Endothelial cell of umbilical vein (primary cell): ENCODE measurements at regions of chr21 and their contacts with region 1.

Region 1: DNA sequence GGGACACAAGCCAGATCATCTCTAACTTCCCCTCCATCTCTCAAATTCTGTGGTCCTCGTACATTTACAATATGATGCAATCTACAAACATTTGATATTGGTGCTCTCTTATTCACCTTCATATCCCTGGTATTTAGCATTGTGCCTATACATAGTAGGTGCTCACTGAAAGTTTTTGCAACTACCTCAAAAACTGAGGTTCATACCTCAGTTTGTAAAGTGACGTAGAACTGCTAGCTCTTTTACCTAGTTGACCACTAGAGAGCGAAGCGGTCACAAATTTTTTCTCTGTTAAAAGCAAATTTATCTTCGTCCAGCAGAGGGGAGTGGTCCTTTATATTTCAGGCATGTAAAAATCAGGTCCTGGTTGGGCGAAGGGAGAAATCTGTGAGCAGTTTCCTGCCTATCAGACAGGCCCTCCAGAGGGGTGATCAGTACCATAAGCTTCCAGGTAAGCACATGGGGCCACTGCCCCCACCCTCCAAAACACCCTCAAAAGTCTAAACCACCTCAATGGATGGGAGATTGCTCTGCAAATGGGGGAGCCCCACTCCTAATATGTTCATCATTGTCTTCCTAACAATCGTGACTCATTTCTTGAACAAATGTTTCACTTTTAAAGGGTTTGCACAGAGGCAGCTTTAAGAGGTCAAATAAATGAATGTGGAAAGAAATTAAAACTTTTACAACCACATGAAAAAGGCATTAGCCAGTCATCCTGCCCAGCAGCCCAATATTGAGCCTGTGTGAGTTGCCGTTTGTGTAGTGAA is 10.6 kb upstream of the HLCS start:
- DNase-seq: peak; percentile 88
- H3K4me3 ChIP-seq: no peak overlapping the region
- H3K27ac ChIP-seq: no peak overlapping the region
- H3K4me1 ChIP-seq: peaks cover 14% of the 10 kb centered on the region
- H3K27me3 ChIP-seq: no peaks in the 10 kb centered on the region
- CTCF ChIP-seq: peak; percentile 58 to 68
- POLR2A ChIP-seq: no peak

Region 2: GRCh38 chr21:36567216-36567885 is 409.7 kb before region 1 on chr21:
- CTCF ChIA-PET with region 1: no interaction called
- POLR2A ChIA-PET with region 1: no interaction called
- dilution Hi-C with region 1: no loop called
- intact Hi-C with region 1: no loop called
- DNase-seq: no peak
- H3K4me3 ChIP-seq: no peak overlapping the region
- H3K27ac ChIP-seq: no peak overlapping the region
- H3K4me1 ChIP-seq: no peaks in the 10 kb centered on the region
- H3K27me3 ChIP-seq: peaks cover 18 to 42% of the 10 kb centered on the region in 2 experiments
- CTCF ChIP-seq: no peak
- POLR2A ChIP-seq: no peak

Region 3: DNA sequence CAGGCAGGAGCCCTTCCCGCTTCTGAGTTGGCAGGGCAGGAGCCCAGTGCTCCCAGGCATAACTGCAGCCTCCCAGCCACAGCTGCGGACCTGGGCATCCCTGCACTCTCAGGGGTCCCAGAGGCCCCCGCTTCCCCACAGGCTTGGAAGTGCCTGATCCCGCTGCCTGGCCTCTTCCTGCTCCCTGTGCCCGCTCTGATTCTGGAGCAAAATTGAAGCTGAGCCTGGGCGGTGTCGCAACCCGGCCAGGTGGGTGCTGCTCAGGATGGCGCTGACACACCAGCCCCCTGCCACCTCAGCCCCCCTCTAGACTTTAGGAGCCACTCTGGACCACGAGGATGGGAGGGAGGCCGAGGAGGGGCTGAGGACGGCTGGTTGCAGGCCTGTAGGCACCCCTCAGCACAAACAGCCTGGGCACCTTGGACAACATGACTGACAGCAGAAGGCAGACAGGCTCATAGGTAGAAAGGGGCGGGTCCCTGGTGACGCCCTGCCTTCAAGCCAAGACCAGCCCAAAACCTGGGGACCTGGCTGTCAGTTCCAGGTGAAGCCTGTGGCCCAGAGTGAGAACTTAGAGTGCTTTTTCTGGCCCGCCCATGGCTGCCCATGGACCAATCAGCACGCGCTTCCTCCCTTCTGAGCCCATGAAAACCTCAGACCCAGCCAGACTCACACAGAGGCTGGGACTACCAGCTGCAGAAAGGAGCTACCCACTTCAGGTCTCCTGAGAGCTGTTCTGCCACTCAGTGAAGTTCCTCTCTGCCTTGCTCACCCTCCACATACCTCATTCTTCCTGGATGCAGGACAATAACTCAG is 17.8 kb before region 1 on chr21:
- CTCF ChIA-PET with region 1: interaction called, 20 read pairs
- POLR2A ChIA-PET with region 1: interaction called, 4 read pairs
- dilution Hi-C with region 1: no loop called
- intact Hi-C with region 1: no loop called
- DNase-seq: no peak
- H3K4me3 ChIP-seq: no peak overlapping the region
- H3K27ac ChIP-seq: no peak overlapping the region
- H3K4me1 ChIP-seq: no peaks in the 10 kb centered on the region
- H3K27me3 ChIP-seq: no peaks in the 10 kb centered on the region
- CTCF ChIP-seq: no peak
- POLR2A ChIP-seq: no peak

Region 4: DNA sequence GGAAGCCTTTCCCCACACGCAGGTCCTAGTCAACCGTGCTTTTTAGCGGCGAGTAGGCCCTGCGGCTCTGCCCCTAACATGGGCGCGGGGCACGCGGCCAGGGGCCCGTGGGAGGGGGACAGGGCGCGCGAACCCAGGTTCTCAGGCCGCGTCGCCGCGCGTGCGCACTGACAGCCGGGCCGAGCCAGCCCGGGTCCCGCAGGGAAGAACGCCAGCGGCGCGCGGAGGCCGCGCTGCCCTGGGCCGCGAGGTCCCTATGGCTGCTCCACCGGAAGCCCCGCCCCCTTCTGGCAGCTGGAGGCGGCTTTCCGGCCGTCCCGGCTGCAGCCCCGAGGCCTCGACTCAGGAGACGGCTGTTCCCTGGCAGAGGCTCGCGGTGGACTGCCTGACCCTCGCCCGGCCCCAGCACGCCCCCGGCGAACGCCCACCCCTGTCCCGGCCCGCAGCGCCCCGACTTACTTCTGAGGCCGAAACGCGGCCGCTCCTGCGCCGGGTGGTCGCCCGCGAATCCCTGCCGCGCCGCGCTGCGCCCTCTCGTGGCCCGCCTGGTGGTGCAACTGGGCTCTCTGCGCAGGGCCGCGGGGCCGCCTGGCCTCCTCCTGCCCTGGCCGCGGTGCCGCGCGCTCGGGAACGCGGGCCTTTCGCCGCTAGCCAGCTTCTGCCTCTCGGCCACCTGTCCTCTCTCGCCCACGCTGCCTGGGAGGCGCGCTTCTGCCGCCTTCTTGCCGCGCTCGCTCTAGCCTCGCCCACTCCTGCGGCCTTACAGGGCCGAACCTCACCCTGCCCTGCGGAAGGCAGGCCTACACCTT is 12.8 kb after region 1 on chr21:
- CTCF ChIA-PET with region 1: interaction called, 109 read pairs
- POLR2A ChIA-PET with region 1: no interaction called
- dilution Hi-C with region 1: no loop called
- intact Hi-C with region 1: loop called (anchors 1 kb)
- DNase-seq: peak; percentile 90
- H3K4me3 ChIP-seq: peak overlapping the region in 2 of 3 experiments; percentile 24 to 56
- H3K27ac ChIP-seq: peak overlapping the region; percentile 36
- H3K4me1 ChIP-seq: peaks cover 2% of the 10 kb centered on the region
- H3K27me3 ChIP-seq: no peaks in the 10 kb centered on the region
- CTCF ChIP-seq: peak; percentile 84 to 87
- POLR2A ChIP-seq: peak; percentile 73

Region 5: DNA sequence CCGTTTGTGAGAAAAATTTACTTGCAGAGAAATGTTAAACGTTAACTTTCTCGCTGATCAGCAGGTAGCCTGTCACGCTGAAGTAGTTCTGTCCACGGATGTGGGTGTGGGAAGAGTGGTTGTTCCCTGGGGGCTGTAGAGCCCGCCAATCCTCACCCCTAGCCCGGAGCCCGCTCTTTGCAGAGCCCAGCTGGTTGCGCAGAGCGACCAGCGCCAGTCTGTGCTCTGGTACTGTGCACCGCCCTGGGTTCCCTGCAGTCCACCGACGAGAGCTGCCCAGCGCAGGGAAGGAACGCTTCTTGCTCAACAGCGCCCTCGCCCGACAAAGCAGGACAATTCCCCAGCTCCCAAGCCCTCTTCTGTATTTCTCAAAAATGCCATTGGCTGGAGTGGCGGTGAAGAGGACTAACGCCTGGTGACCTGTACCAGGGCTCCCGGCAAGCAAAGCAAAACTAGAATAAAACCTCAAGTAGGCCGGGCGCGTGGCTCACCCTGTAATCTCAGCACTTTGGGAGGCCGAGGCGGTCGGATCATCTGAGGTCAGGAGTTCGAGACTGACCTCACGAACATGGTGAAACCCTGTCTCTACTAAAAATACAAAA is 32.8 kb after region 1 on chr21:
- CTCF ChIA-PET with region 1: interaction called, 130 read pairs
- POLR2A ChIA-PET with region 1: no interaction called
- dilution Hi-C with region 1: no loop called
- intact Hi-C with region 1: loop called (anchors 1 kb)
- DNase-seq: peak; percentile 90
- H3K4me3 ChIP-seq: peak overlapping the region in 2 of 3 experiments; percentile 10 to 40
- H3K27ac ChIP-seq: no peak overlapping the region
- H3K4me1 ChIP-seq: peaks cover 8% of the 10 kb centered on the region
- H3K27me3 ChIP-seq: peaks cover 25 to 32% of the 10 kb centered on the region in 2 experiments
- CTCF ChIP-seq: peak; percentile 87 to 94
- POLR2A ChIP-seq: no peak

Region 6: DNA sequence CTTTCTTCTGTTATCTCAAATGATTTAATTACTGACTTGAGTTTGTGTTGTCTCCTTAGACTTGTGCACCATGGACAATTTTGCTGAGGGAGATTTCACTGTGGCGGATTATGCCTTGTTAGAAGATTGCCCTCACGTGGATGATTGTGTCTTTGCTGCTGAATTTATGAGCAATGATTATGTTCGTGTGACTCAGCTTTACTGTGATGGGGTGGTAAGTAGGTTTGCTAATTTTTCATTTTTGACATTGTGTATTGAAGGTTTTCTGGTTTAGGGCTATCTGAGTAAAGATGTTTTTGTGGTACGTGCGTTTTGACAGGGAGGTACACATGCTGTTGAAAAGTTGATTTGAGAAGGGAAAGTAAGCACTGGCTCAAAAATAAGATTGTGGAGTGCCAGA is 110.1 kb after region 1 on chr21:
- CTCF ChIA-PET with region 1: interaction called, 13 read pairs
- POLR2A ChIA-PET with region 1: no interaction called
- dilution Hi-C with region 1: no loop called
- intact Hi-C with region 1: no loop called
- DNase-seq: peak; percentile 31
- H3K4me3 ChIP-seq: no peak overlapping the region
- H3K27ac ChIP-seq: no peak overlapping the region
- H3K4me1 ChIP-seq: no peaks in the 10 kb centered on the region
- H3K27me3 ChIP-seq: no peaks in the 10 kb centered on the region
- CTCF ChIP-seq: no peak
- POLR2A ChIP-seq: no peak

Region 7: DNA sequence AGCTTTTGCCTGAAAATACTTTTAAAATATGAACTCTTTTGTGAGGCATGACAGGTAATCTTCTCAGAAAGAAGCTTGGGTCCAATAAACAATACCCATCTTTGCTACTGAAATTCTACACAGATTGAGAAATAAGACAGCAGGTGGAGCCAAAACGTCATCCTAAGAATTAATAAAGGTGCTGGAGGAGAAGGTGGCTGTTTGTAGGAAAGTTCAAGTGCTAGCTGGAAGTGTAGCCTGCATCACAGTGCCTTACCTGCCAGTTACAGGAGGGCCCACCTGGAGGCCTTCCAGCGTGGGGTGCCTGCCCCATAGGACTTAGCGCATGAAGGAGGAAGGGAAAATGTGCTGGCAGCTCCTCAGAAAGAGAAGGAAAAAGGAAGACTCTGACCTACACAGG is 189.7 kb after region 1 on chr21:
- CTCF ChIA-PET with region 1: interaction called, 12 read pairs
- POLR2A ChIA-PET with region 1: no interaction called
- dilution Hi-C with region 1: no loop called
- intact Hi-C with region 1: no loop called
- DNase-seq: peak; percentile 43
- H3K4me3 ChIP-seq: no peak overlapping the region
- H3K27ac ChIP-seq: no peak overlapping the region
- H3K4me1 ChIP-seq: no peaks in the 10 kb centered on the region
- H3K27me3 ChIP-seq: no peaks in the 10 kb centered on the region
- CTCF ChIP-seq: no peak
- POLR2A ChIP-seq: no peak

Region 8: GRCh38 chr21:37267269-37268184 is 290.5 kb after region 1 on chr21 and contains the start of gene VPS26C:
- CTCF ChIA-PET with region 1: no interaction called
- POLR2A ChIA-PET with region 1: no interaction called
- dilution Hi-C with region 1: no loop called
- intact Hi-C with region 1: no loop called
- DNase-seq: peak; percentile 100
- H3K4me3 ChIP-seq: peak within 1 kb of the TSS; percentile 35 to 73 (median 72)
- H3K27ac ChIP-seq: peak within 1 kb of the TSS; percentile 87
- H3K4me1 ChIP-seq: peaks cover 12% of the 10 kb centered on the region
- H3K27me3 ChIP-seq: no peaks in the 10 kb centered on the region
- CTCF ChIP-seq: no peak
- POLR2A ChIP-seq: peak; percentile 17
- total RNA-seq, gene VPS26C: 53.7 and 57.3 TPM in 2 replicates